IMR-90 (cell line): ENCODE measurements at regions of chr7 and their contacts with region 1.

Region 1: GRCh38 chr7:151286148-151286547 is 37.7 kb upstream of the SMARCD3 start:
- DNase-seq: peak; percentile 14
- ATAC-seq: peak; percentile 74
- H3K4me3 ChIP-seq: no peak overlapping the region
- H3K27ac ChIP-seq: no peak overlapping the region
- H3K4me1 ChIP-seq: no peaks in the 10 kb centered on the region
- H3K27me3 ChIP-seq: peaks cover 37% of the 10 kb centered on the region
- CTCF ChIP-seq: no peak
- POLR2A ChIP-seq: no peak
- RAD21 ChIP-seq: no peak

Region 2: GRCh38 chr7:150860291-150860977 is 425.7 kb before region 1 on chr7:
- CTCF ChIA-PET with region 1: no interaction called
- POLR2A ChIA-PET with region 1: no interaction called
- dilution Hi-C with region 1: no loop called
- in situ Hi-C with region 1: no loop called
- intact Hi-C with region 1: no loop called
- DNase-seq: no peak
- ATAC-seq: peak; percentile 35
- H3K4me3 ChIP-seq: no peak overlapping the region
- H3K27ac ChIP-seq: no peak overlapping the region
- H3K4me1 ChIP-seq: no peaks in the 10 kb centered on the region
- H3K27me3 ChIP-seq: peaks cover under 1% of the 10 kb centered on the region; the same call in 1 of the 2 replicates
- CTCF ChIP-seq: no peak
- POLR2A ChIP-seq: no peak
- RAD21 ChIP-seq: no peak

Region 3: GRCh38 chr7:151017953-151018420 is 268.2 kb before region 1 on chr7:
- CTCF ChIA-PET with region 1: no interaction called
- POLR2A ChIA-PET with region 1: interaction called, 17 read pairs
- dilution Hi-C with region 1: no loop called
- in situ Hi-C with region 1: no loop called
- intact Hi-C with region 1: no loop called
- DNase-seq: peak; percentile 25
- ATAC-seq: peak; percentile 90
- H3K4me3 ChIP-seq: 0 out of 2 replicates have a peak overlapping the region, but pooled peaks have one; percentile 23
- H3K27ac ChIP-seq: no peak overlapping the region
- H3K4me1 ChIP-seq: peaks cover 3% of the 10 kb centered on the region; the same call in 1 of the 2 replicates
- H3K27me3 ChIP-seq: peaks cover 58% of the 10 kb centered on the region
- CTCF ChIP-seq: peak; percentile 79
- POLR2A ChIP-seq: no peak
- RAD21 ChIP-seq: peak; percentile 53

Region 4: GRCh38 chr7:151076611-151077444 is 209.3 kb before region 1 on chr7:
- CTCF ChIA-PET with region 1: no interaction called
- POLR2A ChIA-PET with region 1: no interaction called
- dilution Hi-C with region 1: no loop called
- in situ Hi-C with region 1: no loop called
- intact Hi-C with region 1: no loop called
- DNase-seq: no peak
- ATAC-seq: no peak
- H3K4me3 ChIP-seq: no peak overlapping the region
- H3K27ac ChIP-seq: no peak overlapping the region
- H3K4me1 ChIP-seq: peaks cover 13% of the 10 kb centered on the region
- H3K27me3 ChIP-seq: no peaks in the 10 kb centered on the region
- CTCF ChIP-seq: peak; percentile 31; the same call in 1 of the 2 replicates
- POLR2A ChIP-seq: no peak; the same call in 1 of the 2 replicates
- RAD21 ChIP-seq: 0 out of 2 replicates have a peak, but pooled peaks have one; percentile 21

Region 5: GRCh38 chr7:151272405-151272804 is 13.7 kb before region 1 on chr7:
- CTCF ChIA-PET with region 1: interaction called, 17 read pairs
- POLR2A ChIA-PET with region 1: no interaction called
- dilution Hi-C with region 1: no loop called
- in situ Hi-C with region 1: no loop called
- intact Hi-C with region 1: no loop called
- DNase-seq: no peak
- ATAC-seq: no peak
- H3K4me3 ChIP-seq: no peak overlapping the region
- H3K27ac ChIP-seq: peak overlapping the region; percentile 43; the same call in 1 of the 2 replicates
- H3K4me1 ChIP-seq: peaks cover 8% of the 10 kb centered on the region; the same call in 1 of the 2 replicates
- H3K27me3 ChIP-seq: no peaks in the 10 kb centered on the region; the same call in 1 of the 2 replicates
- CTCF ChIP-seq: no peak
- POLR2A ChIP-seq: no peak
- RAD21 ChIP-seq: no peak